ENCODE measurements at regions of chr3 and their contacts with region 1.

Region 1: DNA sequence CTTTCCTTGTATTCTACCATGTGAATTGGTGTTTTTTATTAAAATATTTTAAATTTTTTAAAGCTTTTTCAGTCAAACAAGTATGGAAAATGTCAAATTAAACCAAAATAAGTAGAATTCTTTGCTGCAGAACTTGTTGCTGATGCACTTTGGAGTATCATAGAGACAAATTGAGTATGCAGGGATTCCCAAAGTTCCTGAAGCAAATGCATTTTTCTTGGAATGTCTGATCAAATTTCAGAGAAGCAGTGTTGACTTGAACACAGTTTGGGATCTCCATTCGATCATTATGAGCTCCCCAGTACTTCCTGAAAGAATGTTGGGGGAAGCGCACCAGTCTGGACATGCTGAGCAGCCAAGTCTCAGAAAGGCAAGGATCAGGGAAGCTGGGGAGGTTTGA is 517.8 kb upstream of the CFAP20DC start:
- DNase-seq: no peak
- H3K27ac ChIP-seq: no peak overlapping the region
- CTCF ChIP-seq: no peak

Region 2: GRCh38 chr3:59143447-59143846 is 424.2 kb before region 1 on chr3:
- CTCF ChIA-PET with region 1: no interaction called
- POLR2A ChIA-PET with region 1: no interaction called
- DNase-seq: no peak
- H3K27ac ChIP-seq: no peak overlapping the region
- CTCF ChIP-seq: no peak

Region 3: GRCh38 chr3:59885101-59885500 is 317.4 kb after region 1 on chr3:
- CTCF ChIA-PET with region 1: interaction called, 10 read pairs
- POLR2A ChIA-PET with region 1: no interaction called
- DNase-seq: no peak
- H3K27ac ChIP-seq: no peak overlapping the region
- CTCF ChIP-seq: no peak

Region 4: GRCh38 chr3:59908280-59908679 is 340.6 kb after region 1 on chr3:
- CTCF ChIA-PET with region 1: no interaction called
- POLR2A ChIA-PET with region 1: no interaction called
- DNase-seq: no peak
- H3K27ac ChIP-seq: no peak overlapping the region
- CTCF ChIP-seq: no peak